ENCODE measurements at regions of chr22 and their contacts with region 1.

Region 1: GRCh38 chr22:26672590-26673468 is 15.4 kb downstream of the MIAT start:
- DNase-seq: peak; percentile 98
- H3K4me3 Mint-ChIP-seq: peak overlapping the region; percentile 95
- H3K27ac Mint-ChIP-seq: peak overlapping the region; percentile 100
- H3K4me1 Mint-ChIP-seq: peaks cover 71% of the 10 kb centered on the region
- H3K27me3 Mint-ChIP-seq: no peaks in the 10 kb centered on the region

Region 2: DNA sequence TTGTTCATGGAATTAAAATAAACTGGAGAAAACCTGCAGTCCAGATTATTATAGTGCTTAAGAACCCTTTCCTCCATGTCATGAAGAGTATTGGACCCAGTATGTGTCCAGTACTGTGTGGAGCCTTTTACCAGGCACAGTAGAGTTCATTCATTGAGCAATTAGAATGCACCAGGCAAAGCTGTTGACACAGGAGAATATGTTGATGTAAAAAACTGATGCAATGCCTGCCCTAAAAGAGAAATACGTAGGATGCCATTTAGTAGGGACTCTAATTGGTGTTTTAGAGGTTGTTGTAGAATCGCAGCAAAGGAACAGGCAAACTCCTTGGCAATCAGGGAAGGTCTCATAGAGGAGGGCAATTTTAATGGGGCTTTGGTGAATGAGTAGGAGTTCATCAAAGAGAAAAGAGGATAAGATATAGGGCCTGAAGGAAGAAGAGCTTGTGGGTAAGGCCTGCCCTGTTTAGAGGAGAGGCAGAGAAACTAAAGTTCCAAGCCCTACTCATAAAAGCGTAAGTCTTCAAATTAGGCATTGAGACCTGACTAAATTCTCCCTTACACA is 377.2 kb before region 1 on chr22:
- CTCF ChIA-PET with region 1: no interaction called
- intact Hi-C with region 1: loop called (anchors 2 kb)
- DNase-seq: no peak
- H3K4me3 Mint-ChIP-seq: no peak overlapping the region
- H3K27ac Mint-ChIP-seq: peak overlapping the region; percentile 19
- H3K4me1 Mint-ChIP-seq: peaks cover 16% of the 10 kb centered on the region
- H3K27me3 Mint-ChIP-seq: no peaks in the 10 kb centered on the region

Region 3: GRCh38 chr22:26511857-26512793 is 160.7 kb before region 1 on chr22 and contains the start of gene TFIP11:
- CTCF ChIA-PET with region 1: interaction called, 3 read pairs
- intact Hi-C with region 1: loop called (anchors 1 kb)
- DNase-seq: peak; percentile 95
- H3K4me3 Mint-ChIP-seq: peak within 1 kb of the TSS; percentile 93
- H3K27ac Mint-ChIP-seq: peak within 1 kb of the TSS; percentile 80
- H3K4me1 Mint-ChIP-seq: peaks cover 44% of the 10 kb centered on the region
- H3K27me3 Mint-ChIP-seq: no peaks in the 10 kb centered on the region
- total RNA-seq, gene TFIP11: 33.3 to 34.4 TPM

Region 4: DNA sequence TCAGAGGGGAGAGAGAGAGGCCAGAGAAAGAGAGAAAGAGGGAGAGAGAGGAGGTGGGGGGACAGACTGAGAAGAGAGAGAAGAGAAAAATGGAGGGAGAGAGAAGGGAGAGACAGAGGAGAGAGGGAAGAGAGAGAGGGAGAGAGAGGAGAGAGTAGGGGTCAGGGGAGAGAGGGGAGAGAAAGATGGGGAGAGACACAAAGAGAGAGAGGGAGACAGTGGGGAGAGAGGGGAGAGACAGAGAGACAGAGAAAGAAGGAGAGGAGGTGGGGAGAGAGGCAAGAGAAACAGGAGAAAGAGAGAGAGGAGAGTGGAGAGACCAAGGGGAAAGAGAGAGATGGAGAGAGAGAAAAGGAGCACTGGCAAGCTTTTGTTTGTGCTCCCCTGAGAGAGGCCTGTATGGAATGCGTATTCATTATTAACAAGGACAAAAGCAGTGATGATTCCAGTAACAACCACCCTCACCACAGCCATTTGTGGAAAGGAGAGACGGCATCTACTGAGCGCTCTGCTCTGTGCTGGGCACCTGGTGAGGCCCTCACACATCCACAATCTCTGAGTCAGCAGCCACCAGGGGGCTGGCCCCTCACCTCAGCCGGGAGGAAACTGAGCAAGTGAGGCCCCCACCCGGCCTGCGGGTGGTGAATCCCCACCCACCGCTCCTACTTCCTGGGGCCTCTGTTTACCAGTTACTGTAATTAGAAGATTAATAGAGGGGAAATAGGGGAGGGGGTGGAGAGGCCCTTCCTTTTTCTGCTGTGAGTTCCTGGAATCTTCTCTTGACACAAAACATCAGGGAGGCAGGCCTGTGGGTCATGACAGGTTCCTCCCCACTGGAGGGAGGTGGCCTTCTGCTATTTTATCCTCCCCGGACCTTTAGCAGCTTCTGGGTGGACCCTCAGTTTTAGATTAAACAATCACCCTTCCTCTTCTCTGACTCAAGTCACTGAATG is 30.1 kb before region 1 on chr22:
- CTCF ChIA-PET with region 1: interaction called, 11 read pairs
- intact Hi-C with region 1: loop called (anchors 1 kb)
- DNase-seq: peak; percentile 96
- H3K4me3 Mint-ChIP-seq: peak overlapping the region; percentile 60
- H3K27ac Mint-ChIP-seq: peak overlapping the region; percentile 95
- H3K4me1 Mint-ChIP-seq: peaks cover 52% of the 10 kb centered on the region
- H3K27me3 Mint-ChIP-seq: peaks cover 8% of the 10 kb centered on the region

Region 5: GRCh38 chr22:26903030-26903856 is 230.4 kb after region 1 on chr22:
- CTCF ChIA-PET with region 1: no interaction called
- intact Hi-C with region 1: no loop called
- DNase-seq: peak; percentile 30
- H3K4me3 Mint-ChIP-seq: peak overlapping the region; percentile 52
- H3K27ac Mint-ChIP-seq: no peak overlapping the region
- H3K4me1 Mint-ChIP-seq: peaks cover 14% of the 10 kb centered on the region
- H3K27me3 Mint-ChIP-seq: peaks cover 37% of the 10 kb centered on the region

Region 6: DNA sequence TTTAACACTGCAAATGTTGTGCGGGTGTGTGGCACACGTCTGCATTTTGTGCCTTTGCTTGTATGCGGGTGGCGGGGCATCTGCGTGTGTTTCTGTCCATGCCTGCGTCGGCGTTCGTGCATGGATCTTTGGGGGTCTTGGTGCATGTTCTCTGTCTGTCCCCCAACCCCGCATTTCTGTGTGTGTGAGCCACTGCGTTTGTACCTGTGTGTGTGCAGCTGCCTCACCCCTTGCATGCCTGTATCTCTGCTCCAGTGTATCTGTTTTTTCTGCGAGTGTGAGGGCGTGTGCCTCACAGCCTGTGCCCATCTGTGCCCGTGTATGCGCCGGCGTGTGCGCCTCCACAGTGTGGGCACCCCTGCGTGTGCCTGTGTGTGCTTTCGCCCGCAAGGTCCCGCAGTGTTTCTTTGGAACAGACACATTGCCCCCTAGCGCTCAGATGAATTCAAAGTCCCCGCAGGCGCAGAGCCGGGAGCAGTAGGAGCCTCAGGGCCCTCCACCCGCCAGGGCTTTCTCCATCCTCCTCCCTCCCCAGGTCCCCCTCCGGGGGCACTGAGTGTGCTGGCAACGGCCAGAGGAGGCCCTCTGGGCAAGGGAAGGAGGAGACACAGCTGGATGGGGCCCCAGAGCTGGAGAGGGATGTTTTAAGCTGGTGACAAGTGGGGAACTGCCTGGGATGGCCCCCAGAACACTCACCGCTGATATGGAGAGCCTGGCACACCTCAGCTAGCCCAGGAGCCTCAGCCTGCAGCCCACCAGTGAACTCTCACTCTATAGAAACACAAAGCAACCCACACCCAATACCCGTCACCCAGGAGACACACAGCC is 1131.9 kb after region 1 on chr22:
- CTCF ChIA-PET with region 1: interaction called, 5 read pairs
- intact Hi-C with region 1: loop called (anchors 10 kb)
- DNase-seq: peak; percentile 74
- H3K4me3 Mint-ChIP-seq: no peak overlapping the region
- H3K27ac Mint-ChIP-seq: no peak overlapping the region
- H3K4me1 Mint-ChIP-seq: peaks cover 11% of the 10 kb centered on the region
- H3K27me3 Mint-ChIP-seq: peaks cover 17% of the 10 kb centered on the region

Measured in activated naive CD4-positive, alpha-beta T cell treated with anti-CD3 and anti-CD28 coated beads for 36 hours (primary cell).